ENCODE measurements at regions of chr9 and their contacts with region 1.

Region 1: DNA sequence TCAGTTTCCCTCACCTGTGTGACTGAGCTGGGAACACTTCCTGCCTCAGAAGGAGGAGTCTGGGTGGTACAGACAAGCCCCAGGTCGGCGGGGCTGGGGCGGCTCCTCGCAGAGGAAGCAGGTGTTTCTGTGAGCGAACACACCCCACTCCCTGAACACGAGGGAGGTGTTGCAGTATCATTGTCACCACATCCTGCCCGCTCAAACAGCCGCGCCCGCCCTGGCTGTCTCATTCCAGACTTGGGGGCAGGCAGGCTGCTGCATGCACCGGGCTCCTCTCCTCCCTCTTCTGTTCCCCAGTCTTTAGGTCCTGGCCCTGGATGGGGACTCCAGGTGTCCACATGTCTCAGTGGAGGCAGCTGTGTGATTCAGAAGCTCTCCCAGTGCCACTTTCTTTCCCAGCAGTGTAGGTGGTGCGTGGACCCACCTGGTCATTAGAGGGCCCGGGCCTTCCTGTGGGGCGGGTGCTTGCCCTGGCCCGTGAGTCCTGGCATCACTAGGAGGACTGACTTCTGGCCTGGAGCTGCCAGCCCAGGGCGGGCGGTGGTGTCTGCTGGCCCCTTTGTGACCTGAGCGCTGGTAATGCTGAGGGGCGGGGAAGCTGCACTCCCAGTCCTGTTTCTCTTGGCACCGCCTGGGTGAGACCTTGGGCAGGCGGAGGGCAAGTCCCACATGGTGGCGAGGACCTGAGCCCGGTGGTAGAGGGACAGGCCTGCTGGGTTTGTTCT is 18.3 kb upstream of the PHYHD1 start:
- DNase-seq: peak in 1 of 2 donors; percentile 92
- H3K4me3 ChIP-seq: no peak overlapping the region
- H3K27ac ChIP-seq: peak overlapping the region; percentile 65 to 90
- H3K4me1 ChIP-seq: peaks cover 3 to 21% of the 10 kb centered on the region in 2 donors
- H3K27me3 ChIP-seq: no peaks in the 10 kb centered on the region
- CTCF ChIP-seq: no peak
- POLR2A ChIP-seq: no peak

Region 2: DNA sequence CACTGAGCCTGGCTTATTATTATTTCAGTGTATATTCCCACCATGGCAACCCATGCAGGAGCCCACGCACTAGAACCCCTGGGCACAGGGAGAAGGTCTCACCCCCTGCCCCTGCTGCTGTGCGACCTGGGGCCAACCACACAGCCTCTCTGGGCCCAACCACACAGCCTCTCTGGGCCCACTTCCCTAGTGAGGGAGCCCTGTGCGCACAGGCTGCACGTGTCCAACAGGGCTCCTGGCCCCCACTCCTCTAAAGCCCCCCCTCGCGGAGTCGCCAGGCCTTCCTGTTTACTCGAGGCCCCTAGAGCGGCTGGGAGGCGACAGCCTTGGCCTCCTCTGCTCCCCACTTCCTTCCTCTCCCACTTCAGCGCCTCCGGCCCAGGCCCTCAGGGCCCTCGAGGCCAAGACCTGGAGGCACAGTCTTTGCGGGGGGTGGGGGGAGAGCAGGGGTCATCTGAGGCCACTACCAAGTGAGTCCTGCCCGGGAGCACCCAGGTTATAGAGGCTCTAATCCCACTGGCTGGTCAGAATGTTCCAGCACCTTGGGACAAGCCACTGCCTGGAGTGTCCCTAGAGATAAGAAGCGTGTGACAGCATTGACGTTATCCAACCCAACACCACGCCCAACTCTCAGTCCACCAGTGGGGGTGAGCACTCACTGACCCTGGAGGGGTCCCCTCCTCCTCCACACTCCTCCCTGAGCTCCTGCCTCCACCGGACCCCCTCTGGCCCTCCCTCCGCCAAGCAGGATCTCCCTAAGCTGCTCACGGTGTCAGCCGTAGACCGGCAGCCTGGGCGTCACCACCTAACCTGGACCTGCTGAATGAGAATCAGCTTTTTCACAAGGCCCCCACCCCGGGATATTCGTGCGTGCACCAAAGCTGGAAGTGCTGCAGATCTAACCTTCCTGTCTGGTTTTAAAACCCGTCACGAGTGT is 1040.2 kb before region 1 on chr9:
- intact Hi-C with region 1: no loop called
- DNase-seq: peak in 1 of 2 donors; percentile 55
- H3K4me3 ChIP-seq: no peak overlapping the region
- H3K27ac ChIP-seq: peak overlapping the region; percentile 72 to 80
- H3K4me1 ChIP-seq: peaks cover 0 to 4% of the 10 kb centered on the region in 2 donors
- H3K27me3 ChIP-seq: no peaks in the 10 kb centered on the region
- CTCF ChIP-seq: no peak
- POLR2A ChIP-seq: no peak

Region 3: DNA sequence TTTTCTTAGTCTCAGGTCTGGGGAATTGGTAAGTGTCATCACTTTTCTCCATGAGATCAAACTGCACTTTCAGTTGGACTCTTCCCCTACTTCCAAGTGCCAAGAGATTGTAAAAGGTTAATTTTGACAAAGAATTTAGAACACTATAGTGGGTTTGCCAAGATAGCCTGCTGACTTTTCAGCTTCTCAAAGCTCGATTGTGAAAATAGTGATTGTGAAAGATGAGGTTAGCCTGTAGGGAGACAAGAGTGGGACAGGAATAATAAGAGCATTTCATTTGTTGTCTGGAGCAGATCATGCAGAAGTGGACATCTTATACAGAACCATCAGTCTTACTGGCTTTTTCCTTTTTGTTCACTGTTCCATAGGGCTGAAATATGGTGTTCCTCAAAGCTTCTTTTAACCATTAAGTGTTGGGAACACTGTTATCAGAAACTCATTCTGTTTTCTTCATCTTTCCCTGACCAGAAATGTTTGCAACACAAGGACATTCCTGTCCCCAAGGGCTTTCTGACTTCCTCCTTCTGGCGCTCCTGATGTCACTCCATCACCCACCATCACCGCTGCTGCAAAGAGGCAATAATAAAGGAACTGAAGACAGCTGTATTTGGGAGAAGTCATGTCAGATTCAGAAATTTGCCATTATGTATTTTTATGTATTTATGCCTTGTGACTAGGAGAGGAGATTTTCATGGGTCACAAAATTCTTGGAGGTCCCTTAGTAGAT is 361.7 kb before region 1 on chr9:
- intact Hi-C with region 1: loop called (anchors 5 kb)
- DNase-seq: no peak
- H3K4me3 ChIP-seq: no peak overlapping the region
- H3K27ac ChIP-seq: no peak overlapping the region
- H3K4me1 ChIP-seq: no peaks in the 10 kb centered on the region
- H3K27me3 ChIP-seq: no peaks in the 10 kb centered on the region
- CTCF ChIP-seq: no peak
- POLR2A ChIP-seq: no peak

Region 4: DNA sequence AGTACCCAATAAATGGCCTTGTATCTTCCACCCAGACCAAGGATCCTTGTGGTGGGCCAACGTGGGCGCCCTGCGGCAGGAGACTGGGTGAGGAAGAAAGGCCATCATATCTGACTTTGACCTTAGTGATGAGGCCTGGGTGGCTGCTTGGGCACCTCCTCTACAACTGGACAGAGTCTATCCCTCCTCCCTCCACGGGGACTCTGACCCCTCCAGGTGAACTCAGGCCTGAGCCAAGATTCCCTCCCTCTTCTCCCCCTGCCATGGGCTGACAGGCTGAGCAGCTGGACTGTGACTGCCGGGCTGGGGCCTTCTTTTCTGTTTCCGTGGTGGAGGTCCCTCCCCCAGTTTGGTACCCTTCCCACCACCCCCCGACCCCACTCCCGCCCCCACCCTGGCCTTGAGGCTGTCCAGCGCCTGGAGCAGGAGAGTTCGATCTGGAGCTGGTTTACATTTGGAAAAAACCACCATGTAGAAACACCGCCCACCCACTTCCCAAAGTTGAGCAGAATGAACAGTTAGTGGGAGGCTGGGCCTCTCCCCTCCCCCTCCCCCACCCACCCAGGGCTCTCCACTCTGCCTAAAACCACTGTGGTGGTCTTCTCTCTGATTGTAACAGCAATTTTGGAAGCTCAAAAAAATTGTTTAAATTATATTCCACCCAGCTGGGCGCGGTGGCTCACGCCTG is 17.0 kb after region 1 on chr9:
- intact Hi-C with region 1: loop called (anchors 1 kb)
- DNase-seq: no peak
- H3K4me3 ChIP-seq: no peak overlapping the region
- H3K27ac ChIP-seq: peak overlapping the region; percentile 80 to 94
- H3K4me1 ChIP-seq: peaks cover 15 to 17% of the 10 kb centered on the region in 2 donors
- H3K27me3 ChIP-seq: no peaks in the 10 kb centered on the region
- CTCF ChIP-seq: no peak
- POLR2A ChIP-seq: no peak

Measured in breast epithelium (tissue), 4 donors.